Left lung (tissue), 14 donors: ENCODE measurements at regions of chr20 and their contacts with region 1.

Region 1: DNA sequence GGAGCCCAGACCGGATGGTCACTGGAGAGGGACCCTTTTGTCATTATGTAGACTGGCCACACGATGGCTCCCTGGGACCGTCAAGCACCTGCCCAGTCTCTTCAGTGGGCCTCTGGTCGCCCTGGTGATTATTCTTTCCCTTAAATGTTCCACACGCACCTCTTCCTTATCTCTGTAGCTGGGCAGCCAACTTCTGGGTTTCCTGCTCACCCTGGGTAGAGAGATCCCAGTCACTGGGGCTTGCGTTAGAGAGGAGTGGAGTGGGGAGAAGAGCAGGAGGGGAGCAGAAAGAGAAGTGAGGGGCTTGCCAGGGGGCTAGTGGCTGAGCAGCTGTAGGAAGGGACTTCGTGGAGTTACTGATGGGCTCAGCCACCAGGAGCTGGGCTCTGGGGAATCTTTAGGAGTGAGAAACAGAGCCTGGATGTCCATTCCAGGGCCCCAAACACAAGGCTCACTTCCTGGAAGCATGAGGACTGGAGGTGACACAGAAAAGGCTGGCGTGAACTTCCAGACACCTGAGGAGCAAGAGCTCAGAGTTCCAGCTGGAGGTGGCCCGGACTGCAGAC is 150.1 kb downstream of the DHX35 start:
- DNase-seq: peak in 2 of 4 donors; percentile 33 to 53
- ATAC-seq: peak; percentile 90
- H3K4me3 ChIP-seq: no peak overlapping the region
- H3K27ac ChIP-seq: no peak overlapping the region
- H3K4me1 ChIP-seq: no peaks in the 10 kb centered on the region
- H3K27me3 ChIP-seq: peaks cover 0 to 71% of the 10 kb centered on the region in 2 donors
- CTCF ChIP-seq: peak; percentile 35 to 47

Region 2: DNA sequence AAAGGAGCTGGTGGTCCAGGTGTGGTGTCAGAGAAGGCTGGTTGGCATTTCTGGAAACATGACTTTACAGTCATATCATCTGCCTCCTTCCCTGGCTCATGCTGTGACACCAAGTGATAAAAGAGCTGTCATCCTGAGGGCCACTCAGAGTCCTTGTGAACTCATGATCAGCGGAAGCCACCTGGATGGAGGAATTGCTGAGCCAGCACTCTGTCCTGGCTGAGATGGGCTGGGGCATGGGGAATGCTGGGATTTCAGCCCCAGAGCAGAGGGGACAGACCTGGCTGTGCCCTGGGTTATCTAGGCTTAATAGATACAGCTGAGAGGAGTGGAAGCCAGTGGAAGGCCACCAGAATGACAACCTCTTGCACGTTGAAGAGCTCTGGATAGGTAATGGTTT is 64.2 kb after region 1 on chr20:
- intact Hi-C with region 1: no loop called
- DNase-seq: no peak
- ATAC-seq: no peak
- H3K4me3 ChIP-seq: no peak overlapping the region
- H3K27ac ChIP-seq: no peak overlapping the region
- H3K4me1 ChIP-seq: no peaks in the 10 kb centered on the region
- H3K27me3 ChIP-seq: no peaks in the 10 kb centered on the region
- CTCF ChIP-seq: no peak

Region 3: DNA sequence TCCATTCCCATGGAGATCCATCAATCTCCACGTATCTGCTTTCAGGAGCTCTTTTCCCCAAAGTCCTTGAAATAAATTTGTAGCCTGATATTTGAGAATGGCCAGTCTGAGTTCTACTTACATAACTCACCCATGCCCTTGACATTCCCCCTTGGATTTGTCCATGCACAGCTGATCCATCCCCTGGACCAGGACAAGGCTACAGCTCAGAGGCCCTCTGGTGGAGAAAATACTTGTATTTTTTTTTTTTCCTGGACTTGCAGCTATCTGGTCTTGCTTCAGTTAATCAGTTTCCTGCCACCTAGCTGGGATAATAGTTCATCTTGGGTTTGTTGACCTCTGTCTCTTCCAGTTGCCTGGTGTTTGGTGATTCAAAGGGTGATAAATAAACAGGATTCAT is 317.5 kb after region 1 on chr20:
- intact Hi-C with region 1: loop called in 1 of 2 experiments (anchors 10 kb)
- DNase-seq: peak in 1 of 4 donors; percentile 10
- ATAC-seq: no peak
- H3K4me3 ChIP-seq: no peak overlapping the region
- H3K27ac ChIP-seq: no peak overlapping the region
- H3K4me1 ChIP-seq: no peaks in the 10 kb centered on the region
- H3K27me3 ChIP-seq: no peaks in the 10 kb centered on the region
- CTCF ChIP-seq: peak in 1 of 2 donors; percentile 22